ENCODE measurements at regions of chr4 and their contacts with region 1.

Region 1: DNA sequence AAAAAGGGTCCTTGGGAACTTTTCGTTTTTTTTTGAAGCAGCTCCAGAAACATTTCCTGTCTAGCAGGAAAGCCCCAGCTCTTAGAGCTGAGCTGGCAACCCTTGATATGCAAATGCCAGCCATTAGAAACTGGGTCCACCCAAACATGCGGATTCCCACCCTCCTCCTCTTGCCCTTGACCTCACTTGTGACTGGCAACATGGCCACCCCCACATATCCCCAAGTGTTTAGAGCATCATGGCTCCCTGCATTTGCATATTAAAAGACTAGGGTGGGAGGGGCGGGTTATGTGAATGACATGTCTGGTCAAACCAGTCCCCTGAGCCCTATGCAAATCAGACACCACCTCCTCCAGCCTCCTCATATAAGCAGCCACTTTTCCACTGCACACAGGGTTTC is 671.1 kb downstream of the FAT4 start:
- DNase-seq: no peak
- H3K27ac ChIP-seq: no peak overlapping the region
- CTCF ChIP-seq: no peak

Region 2: DNA sequence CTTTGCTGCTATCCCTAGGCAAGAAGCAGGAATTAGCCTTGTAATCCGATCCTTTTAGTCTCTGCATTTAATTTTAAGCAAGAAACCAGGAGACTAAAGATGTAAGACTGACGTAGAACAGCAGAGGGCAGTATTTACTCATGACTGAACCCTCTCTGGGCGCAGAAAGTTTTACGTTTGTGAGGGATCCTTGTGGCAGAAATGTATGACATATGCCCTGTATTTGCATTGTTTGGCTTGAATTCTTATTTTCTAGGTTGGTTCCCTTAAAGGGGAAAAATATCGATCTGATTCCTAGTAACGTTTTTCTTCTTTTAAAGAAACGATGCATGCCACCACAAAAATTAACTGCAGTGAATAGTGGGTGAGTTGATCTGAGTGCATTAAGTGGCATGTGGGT is 672.4 kb before region 1 on chr4:
- CTCF ChIA-PET with region 1: interaction called, 10 read pairs
- POLR2A ChIA-PET with region 1: no interaction called
- DNase-seq: peak; percentile 57
- H3K27ac ChIP-seq: no peak overlapping the region
- CTCF ChIP-seq: peak; percentile 79